Psoas muscle (tissue), 8 donors: ENCODE measurements at regions of chr5 and their contacts with region 1.

Region 1: DNA sequence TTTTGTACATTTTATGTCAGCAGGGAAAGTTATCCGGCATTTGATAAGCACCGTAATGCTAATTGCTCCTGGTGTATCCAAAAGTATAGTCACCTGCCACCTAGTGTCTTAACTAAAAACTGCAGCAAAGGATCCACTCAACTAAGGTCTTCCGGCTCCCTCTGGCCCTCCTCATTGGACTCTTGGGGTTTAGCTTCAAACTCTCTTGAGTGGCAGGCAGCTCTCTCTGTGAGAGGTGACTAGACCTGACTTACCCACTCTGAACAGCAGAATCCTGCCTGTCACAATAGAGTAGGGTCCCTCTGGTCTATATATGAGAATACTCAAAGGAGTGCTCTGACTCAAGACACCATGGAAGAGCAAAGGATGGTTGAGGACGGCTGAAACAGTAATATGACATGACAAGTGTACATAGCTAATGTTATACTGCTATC is 60.3 kb upstream of the CAST start:
- DNase-seq: no peak
- ATAC-seq: peak; percentile 67 to 96 (median 86)
- H3K4me3 ChIP-seq: no peak overlapping the region
- H3K27ac ChIP-seq: no peak overlapping the region
- H3K4me1 ChIP-seq: no peaks in the 10 kb centered on the region
- H3K27me3 ChIP-seq: no peaks in the 10 kb centered on the region
- CTCF ChIP-seq: peak; percentile 90

Region 2: GRCh38 chr5:96113170-96113939 is 488.5 kb before region 1 on chr5:
- intact Hi-C with region 1: loop called in 1 of 2 experiments (anchors 10 kb)
- DNase-seq: peak in 1 of 2 donors; percentile 52
- ATAC-seq: peak in 3 of 4 donors; percentile 57 to 83 (median 70)
- H3K4me3 ChIP-seq: no peak overlapping the region
- H3K27ac ChIP-seq: no peak overlapping the region
- H3K4me1 ChIP-seq: peaks cover 10% of the 10 kb centered on the region
- H3K27me3 ChIP-seq: no peaks in the 10 kb centered on the region
- CTCF ChIP-seq: no peak

Region 3: GRCh38 chr5:96344678-96345577 is 256.9 kb before region 1 on chr5:
- intact Hi-C with region 1: loop called (anchors 1 to 2 kb)
- DNase-seq: no peak
- ATAC-seq: peak; percentile 89 to 97 (median 92)
- H3K4me3 ChIP-seq: no peak overlapping the region
- H3K27ac ChIP-seq: no peak overlapping the region
- H3K4me1 ChIP-seq: peaks cover 4% of the 10 kb centered on the region
- H3K27me3 ChIP-seq: no peaks in the 10 kb centered on the region
- CTCF ChIP-seq: peak; percentile 66

Region 4: DNA sequence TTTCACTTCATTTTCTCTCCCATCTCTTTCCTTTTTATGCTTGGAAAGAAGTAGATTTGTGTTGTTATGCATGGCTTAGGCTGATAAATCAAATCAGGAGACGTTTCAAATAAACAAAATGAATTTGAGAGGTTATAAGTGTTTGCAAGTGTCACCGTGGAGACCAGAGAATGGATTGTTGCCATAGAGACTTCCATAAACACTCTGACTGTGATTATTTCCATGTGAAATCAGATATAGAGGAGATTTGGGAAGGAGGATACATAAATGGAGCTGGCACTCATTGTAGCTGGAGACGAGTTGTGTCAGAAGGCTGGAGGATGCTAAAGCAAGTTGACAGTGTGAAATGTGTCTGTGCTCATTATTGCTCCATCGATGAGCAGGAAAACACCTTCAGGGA is 84.5 kb before region 1 on chr5:
- intact Hi-C with region 1: no loop called
- DNase-seq: no peak
- ATAC-seq: no peak
- H3K4me3 ChIP-seq: no peak overlapping the region
- H3K27ac ChIP-seq: no peak overlapping the region
- H3K4me1 ChIP-seq: no peaks in the 10 kb centered on the region
- H3K27me3 ChIP-seq: no peaks in the 10 kb centered on the region
- CTCF ChIP-seq: no peak

Region 5: GRCh38 chr5:96614110-96614691 is 12.4 kb after region 1 on chr5:
- intact Hi-C with region 1: no loop called
- DNase-seq: no peak
- ATAC-seq: peak; percentile 93 to 98 (median 96)
- H3K4me3 ChIP-seq: no peak overlapping the region
- H3K27ac ChIP-seq: peak overlapping the region; percentile 48
- H3K4me1 ChIP-seq: peaks cover 8% of the 10 kb centered on the region
- H3K27me3 ChIP-seq: no peaks in the 10 kb centered on the region
- CTCF ChIP-seq: peak; percentile 63

Region 6: DNA sequence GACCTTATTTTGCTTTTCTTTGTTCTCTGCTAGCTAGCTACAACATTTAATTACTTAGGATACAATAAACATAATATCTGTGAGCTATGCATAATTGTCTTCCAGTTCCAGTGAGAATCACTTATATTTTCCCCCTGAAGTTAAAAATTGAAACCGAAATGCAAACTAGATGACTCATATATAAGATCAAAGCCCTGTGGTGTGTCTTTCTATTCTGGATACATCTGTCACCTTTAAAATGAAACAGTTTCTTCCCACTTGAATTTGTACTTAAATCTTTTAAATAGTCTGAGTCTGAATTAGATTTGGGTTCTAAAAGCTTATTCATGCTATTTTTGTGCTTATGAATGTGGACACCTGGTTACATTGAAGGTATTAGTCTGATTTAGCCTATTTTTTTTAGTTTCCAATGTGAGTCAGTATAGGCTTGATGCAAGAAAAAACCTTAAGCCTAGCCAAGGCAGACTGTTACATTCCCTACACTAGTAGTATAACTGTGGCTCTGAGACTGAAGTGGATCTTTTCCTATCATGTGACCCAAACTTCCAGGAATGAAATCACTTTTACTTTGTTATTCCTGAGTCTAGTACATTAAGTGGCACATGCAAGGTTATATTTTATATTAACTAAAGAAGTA is 1468.2 kb after region 1 on chr5:
- intact Hi-C with region 1: no loop called
- DNase-seq: no peak
- ATAC-seq: no peak
- H3K4me3 ChIP-seq: no peak overlapping the region
- H3K27ac ChIP-seq: no peak overlapping the region
- H3K4me1 ChIP-seq: no peaks in the 10 kb centered on the region
- H3K27me3 ChIP-seq: no peaks in the 10 kb centered on the region
- CTCF ChIP-seq: no peak